ENCODE measurements at regions of chr1 and their contacts with region 1.

Region 1: GRCh38 chr1:52343979-52344378 is 22.0 kb downstream of the CC2D1B start:
- DNase-seq: no peak
- H3K4me3 ChIP-seq: no peak overlapping the region
- H3K27ac ChIP-seq: no peak overlapping the region
- H3K4me1 ChIP-seq: no peaks in the 10 kb centered on the region
- H3K27me3 ChIP-seq: no peaks in the 10 kb centered on the region
- CTCF ChIP-seq: no peak
- POLR2A ChIP-seq: no peak

Region 2: DNA sequence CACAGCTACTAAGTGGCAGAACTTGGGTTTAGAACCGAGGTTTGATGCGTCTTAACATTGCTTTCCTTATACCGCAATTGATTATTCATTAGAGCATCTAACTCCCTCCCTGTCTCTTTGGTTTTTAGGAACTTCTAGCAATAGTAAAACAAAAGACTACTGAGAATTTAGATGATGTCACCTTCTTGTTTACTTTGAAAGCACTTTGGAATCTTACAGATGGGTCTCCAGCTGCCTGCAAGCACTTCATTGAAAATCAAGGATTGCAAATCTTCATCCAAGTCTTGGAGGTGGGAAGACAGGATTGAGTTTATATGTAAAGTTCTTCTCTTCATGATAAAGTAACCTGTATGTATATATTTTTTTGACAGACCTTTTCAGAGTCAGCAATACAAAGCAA is 533.6 kb after region 1 on chr1:
- intact Hi-C with region 1: loop called (anchors 5 kb)
- DNase-seq: no peak
- H3K4me3 ChIP-seq: no peak overlapping the region
- H3K27ac ChIP-seq: no peak overlapping the region
- H3K4me1 ChIP-seq: no peaks in the 10 kb centered on the region
- H3K27me3 ChIP-seq: no peaks in the 10 kb centered on the region
- CTCF ChIP-seq: no peak
- POLR2A ChIP-seq: no peak